Heart right ventricle (tissue), 16 donors: ENCODE measurements at regions of chr3 and their contacts with region 1.

Region 1: DNA sequence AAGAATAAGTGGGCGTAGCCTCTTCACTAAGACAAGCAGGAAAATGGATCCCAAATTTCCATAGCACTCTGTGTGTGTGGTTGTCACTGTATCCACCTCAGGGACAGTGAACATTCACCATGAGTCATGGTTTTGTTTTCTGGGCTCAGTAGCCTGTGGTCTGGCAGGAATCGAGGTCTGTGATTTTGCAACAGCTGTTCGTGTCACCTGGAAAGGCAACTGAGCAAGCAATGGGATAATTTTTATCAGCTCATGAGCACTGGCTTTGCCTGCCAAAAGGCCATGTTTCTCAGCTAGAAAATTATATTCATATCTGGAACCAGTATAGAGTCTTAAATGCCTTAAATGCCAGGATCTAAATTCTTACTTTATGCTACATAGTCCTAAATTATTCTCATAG is 60.9 kb downstream of the STRIT1 start:
- DNase-seq: peak; percentile 29 to 72
- ATAC-seq: peak; percentile 91 to 96 (median 94)
- H3K4me3 ChIP-seq: no peak overlapping the region
- H3K27ac ChIP-seq: peak overlapping the region; percentile 30 to 87 (median 78)
- H3K4me1 ChIP-seq: peaks cover 0 to 20% (median 15%) of the 10 kb centered on the region in 9 donors
- H3K27me3 ChIP-seq: no peaks in the 10 kb centered on the region
- CTCF ChIP-seq: no peak

Region 2: DNA sequence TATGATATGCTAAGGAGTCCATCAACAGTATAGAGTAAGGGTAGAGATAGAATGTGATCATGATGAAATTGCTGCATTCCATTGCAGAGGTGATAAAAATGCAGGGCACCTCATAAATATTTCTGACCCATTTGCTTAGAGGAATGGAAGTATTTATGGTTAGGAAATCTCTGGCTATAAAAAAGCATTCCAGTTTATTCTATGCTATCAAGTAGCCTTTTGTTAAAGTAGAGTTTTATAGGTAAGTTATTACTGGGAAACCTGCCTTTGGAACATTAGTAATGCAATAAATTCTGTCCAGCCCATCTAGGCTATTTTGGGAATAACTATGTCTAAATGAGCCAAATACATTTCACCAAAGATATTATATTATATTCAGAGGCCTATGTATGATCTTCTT is 80.7 kb after region 1 on chr3:
- intact Hi-C with region 1: loop called in 2 of 10 experiments (anchors 5 to 10 kb)
- DNase-seq: no peak
- ATAC-seq: no peak
- H3K4me3 ChIP-seq: no peak overlapping the region
- H3K27ac ChIP-seq: no peak overlapping the region
- H3K4me1 ChIP-seq: peaks cover 0 to 9% (median 5%) of the 10 kb centered on the region in 9 donors
- H3K27me3 ChIP-seq: no peaks in the 10 kb centered on the region
- CTCF ChIP-seq: no peak

Region 3: DNA sequence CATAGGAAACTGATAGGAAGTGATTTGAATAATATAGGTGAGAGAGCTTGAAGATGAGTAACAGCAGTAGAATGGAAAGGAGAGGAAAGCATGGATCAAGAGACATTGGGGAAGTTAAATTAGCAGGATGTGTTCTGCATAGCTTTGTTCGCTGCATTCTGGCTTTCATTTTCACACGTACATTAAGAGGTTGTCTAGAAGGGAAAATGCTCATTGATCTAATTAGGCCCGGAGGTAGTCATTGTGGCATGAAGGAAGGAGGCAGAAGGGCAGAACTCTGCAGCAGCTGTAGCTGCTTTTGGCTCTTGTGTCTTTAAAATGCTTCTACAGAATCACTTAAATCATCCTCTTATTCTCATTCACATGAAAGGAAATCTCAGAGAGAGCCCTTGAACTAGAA is 928.0 kb after region 1 on chr3:
- intact Hi-C with region 1: no loop called
- DNase-seq: no peak
- ATAC-seq: no peak
- H3K4me3 ChIP-seq: no peak overlapping the region
- H3K27ac ChIP-seq: no peak overlapping the region
- H3K4me1 ChIP-seq: no peaks in the 10 kb centered on the region
- H3K27me3 ChIP-seq: no peaks in the 10 kb centered on the region
- CTCF ChIP-seq: no peak